ENCODE measurements at regions of chr16 and their contacts with region 1.

Region 1: DNA sequence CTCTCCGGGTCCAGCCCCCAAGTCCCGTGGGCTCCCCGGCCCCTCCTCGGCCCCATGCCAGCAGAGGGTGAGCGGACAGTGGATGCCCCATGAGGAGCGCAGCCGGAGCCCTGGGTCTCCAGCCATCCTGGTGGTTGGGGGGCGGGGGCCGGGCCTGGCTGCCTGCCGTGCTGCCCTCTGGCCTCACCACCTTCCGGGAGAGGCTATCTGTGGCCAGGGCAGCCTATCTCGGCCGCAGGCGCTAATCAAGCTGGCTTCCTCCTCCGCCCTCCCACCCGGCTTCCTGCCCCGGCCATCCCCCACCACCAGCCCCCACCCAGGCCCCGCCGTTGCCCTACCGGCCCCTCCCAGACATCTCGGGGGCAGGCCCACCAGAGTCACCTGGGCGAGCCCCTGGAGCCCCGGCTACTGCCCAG is 46.8 kb downstream of the ZFPM1 start:
- DNase-seq: no peak
- H3K4me3 ChIP-seq: no peak overlapping the region
- H3K27ac ChIP-seq: no peak overlapping the region
- H3K4me1 ChIP-seq: peaks cover 0 to 3% (median 2%) of the 10 kb centered on the region in 4 donors
- H3K27me3 ChIP-seq: no peaks in the 10 kb centered on the region
- CTCF ChIP-seq: no peak
- EP300 ChIP-seq: no peak
- POLR2A ChIP-seq: no peak

Region 2: DNA sequence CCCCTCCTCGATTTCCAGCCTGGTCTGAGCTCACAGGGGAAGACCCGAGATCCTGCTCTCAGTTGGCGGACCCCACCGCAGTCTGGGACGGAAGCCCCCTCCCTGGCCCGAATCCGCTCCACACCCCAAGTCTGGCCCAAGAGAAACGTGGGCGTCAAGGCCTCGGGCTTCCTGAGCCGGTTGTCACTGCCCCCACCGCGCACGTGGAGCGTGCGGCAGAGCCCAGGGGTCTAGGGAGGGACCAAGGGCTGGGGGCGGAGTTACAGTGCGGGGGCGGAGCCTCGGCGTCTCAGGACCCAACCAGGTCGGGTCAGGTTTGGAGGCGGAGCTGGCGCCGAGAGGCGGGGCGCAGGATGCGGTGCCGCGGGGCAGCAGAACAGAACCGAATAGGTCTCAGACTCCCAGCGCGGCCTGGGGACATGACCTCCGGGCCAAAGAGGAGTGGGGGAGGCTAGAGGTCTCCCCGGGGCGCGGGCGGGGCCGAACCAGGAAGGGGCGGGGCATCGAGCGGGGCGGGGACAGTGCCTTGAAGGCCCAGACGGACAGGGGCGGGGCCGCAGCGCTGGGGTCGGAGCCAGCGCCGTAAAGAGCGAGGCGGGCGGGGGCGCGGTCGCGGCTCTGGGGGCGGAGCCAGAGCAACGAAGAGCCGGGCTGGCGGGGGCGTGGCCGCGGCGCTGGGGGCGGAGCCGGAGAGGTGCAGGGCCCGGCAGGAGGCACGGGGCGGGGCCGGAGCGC is 47.2 kb before region 1 on chr16:
- in situ Hi-C with region 1: no loop called
- intact Hi-C with region 1: no loop called
- DNase-seq: peak; percentile 99
- H3K4me3 ChIP-seq: peak overlapping the region; percentile 27 to 64 (median 60)
- H3K27ac ChIP-seq: peak overlapping the region; percentile 73 to 85 (median 82)
- H3K4me1 ChIP-seq: peaks cover 19 to 40% (median 30%) of the 10 kb centered on the region in 4 donors
- H3K27me3 ChIP-seq: peaks cover 12% of the 10 kb centered on the region
- CTCF ChIP-seq: peak in 1 of 5 experiments; percentile 3
- EP300 ChIP-seq: no peak
- POLR2A ChIP-seq: no peak

Region 3: DNA sequence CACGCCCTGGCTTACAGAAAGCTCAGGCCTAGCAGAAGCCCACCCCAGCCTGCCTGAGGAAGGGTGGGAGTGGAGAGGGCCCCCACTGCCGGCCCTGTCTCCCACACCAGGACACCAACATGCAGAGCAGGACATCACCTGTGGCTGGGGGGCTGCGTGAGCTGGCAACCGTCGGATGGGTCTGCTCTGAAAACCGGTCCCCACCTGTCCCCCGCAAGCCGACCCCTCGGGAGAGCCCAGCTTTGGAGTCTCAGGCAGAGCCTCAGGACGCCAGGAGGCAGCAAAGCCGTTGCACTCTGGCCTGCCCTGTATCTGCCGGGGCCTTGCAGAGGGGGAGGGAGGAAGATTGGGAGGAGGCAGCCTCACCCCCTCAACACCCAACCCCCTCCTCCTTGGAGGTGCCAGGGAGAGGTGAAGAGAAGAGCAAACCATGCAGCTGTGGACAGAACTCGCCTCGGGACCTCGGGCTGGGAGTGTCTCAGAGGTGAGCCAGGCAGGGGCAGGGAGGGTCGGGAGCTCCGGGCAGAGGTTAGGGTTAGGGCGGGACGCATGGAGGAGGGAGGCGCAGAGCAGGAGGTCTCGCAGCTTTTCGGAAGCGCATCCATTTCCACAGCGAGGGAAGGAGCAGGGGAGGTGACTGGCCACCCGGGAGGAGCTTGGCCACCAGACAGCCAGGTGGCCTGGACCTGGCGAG is 40.0 kb after region 1 on chr16:
- in situ Hi-C with region 1: no loop called
- intact Hi-C with region 1: loop called (anchors 1 kb)
- DNase-seq: no peak
- H3K4me3 ChIP-seq: no peak overlapping the region
- H3K27ac ChIP-seq: no peak overlapping the region
- H3K4me1 ChIP-seq: peaks cover 6 to 9% (median 9%) of the 10 kb centered on the region in 4 donors
- H3K27me3 ChIP-seq: peaks cover 39% of the 10 kb centered on the region
- CTCF ChIP-seq: no peak
- EP300 ChIP-seq: no peak
- POLR2A ChIP-seq: no peak

Region 4: DNA sequence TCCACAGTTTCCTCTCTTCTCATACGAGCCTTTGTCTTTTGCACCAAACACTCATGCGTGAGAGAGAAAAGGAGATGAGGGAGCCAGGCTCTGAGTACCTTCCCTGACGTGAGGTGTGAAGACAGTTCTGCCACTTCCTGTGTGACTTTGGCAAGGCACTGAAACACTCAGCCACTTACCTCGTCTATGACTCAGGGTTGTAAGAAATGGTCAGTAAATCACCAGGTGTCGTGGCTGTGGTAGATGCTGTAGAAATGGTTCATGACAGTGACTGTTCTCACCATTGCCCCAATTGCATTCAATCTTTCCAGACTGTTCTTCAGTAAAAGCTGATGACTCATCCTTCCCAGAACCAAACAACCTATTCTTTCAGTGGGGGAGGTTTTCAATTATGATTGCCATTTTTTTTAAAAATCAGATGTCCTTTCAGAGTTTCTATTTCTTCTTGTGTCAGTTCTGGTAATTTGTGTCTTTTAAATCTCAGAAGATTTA is 526.3 kb after region 1 on chr16:
- in situ Hi-C with region 1: no loop called
- intact Hi-C with region 1: no loop called
- DNase-seq: no peak
- H3K4me3 ChIP-seq: no peak overlapping the region
- H3K27ac ChIP-seq: no peak overlapping the region
- H3K4me1 ChIP-seq: no peaks in the 10 kb centered on the region
- H3K27me3 ChIP-seq: peaks cover 15% of the 10 kb centered on the region
- CTCF ChIP-seq: no peak
- EP300 ChIP-seq: no peak
- POLR2A ChIP-seq: no peak

Measured in transverse colon (tissue), 4 donors.